ENCODE measurements at regions of chr16 and their contacts with region 1.

Region 1: GRCh38 chr16:87375426-87376135 is 8.0 kb downstream of the FBXO31 start:
- DNase-seq: no peak
- H3K4me3 ChIP-seq: no peak overlapping the region
- H3K27ac ChIP-seq: no peak overlapping the region
- H3K4me1 ChIP-seq: peaks cover 13% of the 10 kb centered on the region
- H3K27me3 ChIP-seq: no peaks in the 10 kb centered on the region
- CTCF ChIP-seq: no peak
- EP300 ChIP-seq: no peak
- POLR2A ChIP-seq: no peak

Region 2: DNA sequence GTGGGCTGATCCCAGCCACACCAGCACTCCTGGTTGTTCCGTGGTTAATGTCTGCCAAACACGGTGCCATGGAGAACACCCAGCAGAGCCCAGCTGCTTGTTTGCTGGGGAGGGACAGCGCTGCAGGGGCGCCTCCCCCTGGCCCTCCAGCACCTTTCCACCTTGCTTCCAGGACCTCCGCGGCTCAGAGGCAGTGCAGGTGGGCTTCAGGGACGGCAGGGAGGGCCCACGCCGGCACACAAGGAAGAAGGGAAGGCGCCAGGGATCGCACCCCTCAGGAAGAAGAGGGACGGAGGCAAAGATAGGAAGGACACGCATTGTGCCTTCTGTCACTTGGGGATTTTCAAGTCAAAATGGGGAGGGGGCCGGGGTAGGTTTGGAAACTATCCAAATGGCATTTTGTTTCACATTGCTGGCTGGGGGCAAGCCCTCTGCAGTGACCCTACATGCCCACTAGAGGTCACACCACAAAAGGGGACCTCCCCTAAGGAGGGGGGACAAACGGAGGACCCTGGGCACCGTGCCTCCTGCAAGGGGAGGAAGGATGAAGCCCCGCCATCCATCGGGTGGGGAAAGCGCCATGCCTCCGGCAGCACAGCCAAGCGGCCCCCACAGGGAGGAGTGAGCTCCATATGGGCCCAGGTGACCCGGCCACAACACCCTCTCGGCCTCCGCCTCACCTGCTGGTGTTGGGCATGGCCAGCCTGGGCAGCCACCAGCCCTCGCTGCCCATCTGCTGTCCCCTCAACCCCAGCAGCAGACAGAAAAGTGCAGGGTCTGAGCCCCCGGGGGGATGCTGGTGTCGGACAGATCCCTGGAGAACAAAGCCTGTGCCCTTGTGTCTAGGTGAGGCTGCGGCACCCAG is 50.9 kb before region 1 on chr16:
- intact Hi-C with region 1: loop called in 2 of 4 experiments (anchors 10 kb)
- DNase-seq: peak in 4 of 5 donors; percentile 44 to 59 (median 54)
- H3K4me3 ChIP-seq: no peak overlapping the region
- H3K27ac ChIP-seq: no peak overlapping the region
- H3K4me1 ChIP-seq: peaks cover 4% of the 10 kb centered on the region
- H3K27me3 ChIP-seq: no peaks in the 10 kb centered on the region
- CTCF ChIP-seq: peak; percentile 22 to 51 (median 39)
- EP300 ChIP-seq: no peak
- POLR2A ChIP-seq: no peak

Region 3: DNA sequence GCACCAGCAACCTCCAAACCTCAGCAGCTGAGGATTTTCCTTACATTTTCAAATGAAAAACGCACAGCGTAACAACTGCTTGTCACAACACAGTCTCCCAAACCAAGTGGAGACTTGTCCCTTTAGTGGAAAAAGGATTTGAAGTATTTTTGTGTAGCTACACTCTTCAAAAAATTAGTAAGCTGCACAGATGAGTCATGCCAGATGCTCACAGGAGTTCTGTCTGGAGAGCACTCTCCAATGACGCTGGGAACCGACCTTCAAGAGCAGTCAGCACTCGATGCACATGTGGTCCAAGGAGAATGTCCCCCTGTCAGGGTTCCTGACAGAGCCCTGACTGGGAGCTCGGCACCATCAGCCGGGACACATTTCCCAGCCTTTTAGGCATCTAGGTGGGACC is 56.3 kb after region 1 on chr16:
- intact Hi-C with region 1: no loop called
- DNase-seq: no peak
- H3K4me3 ChIP-seq: no peak overlapping the region
- H3K27ac ChIP-seq: no peak overlapping the region
- H3K4me1 ChIP-seq: peaks cover 8% of the 10 kb centered on the region
- H3K27me3 ChIP-seq: no peaks in the 10 kb centered on the region
- CTCF ChIP-seq: no peak
- EP300 ChIP-seq: no peak
- POLR2A ChIP-seq: no peak

Measured in ovary (tissue), 10 donors.